Heart right ventricle (tissue), 16 donors: ENCODE measurements at regions of chr11 and their contacts with region 1.

Region 1: DNA sequence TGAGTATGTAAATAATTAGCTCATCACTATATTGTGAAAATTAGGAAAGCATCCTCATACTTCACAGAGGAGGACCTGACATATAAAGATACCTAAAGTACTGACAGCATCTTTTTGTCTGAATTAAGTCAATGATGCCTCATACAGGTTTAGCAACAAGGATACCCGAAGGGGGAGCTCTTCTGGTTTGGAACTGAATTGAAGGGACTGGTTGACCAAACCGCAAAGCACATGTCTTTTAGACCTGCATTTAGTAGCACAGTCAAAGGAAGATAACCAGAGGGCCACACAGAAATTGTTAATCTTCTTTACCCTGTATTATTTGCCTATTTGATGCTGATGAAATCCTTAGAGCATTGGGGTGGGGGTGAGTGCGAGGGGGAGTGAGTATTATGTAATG is 12.9 kb upstream of the WT1 start:
- DNase-seq: no peak
- ATAC-seq: no peak
- H3K4me3 ChIP-seq: no peak overlapping the region
- H3K27ac ChIP-seq: no peak overlapping the region
- H3K4me1 ChIP-seq: peaks cover 0 to 8% (median 0%) of the 10 kb centered on the region in 9 donors
- H3K27me3 ChIP-seq: peaks cover 0 to 15% (median 9%) of the 10 kb centered on the region in 7 donors
- CTCF ChIP-seq: peak in 1 of 9 donors; percentile 16

Region 2: DNA sequence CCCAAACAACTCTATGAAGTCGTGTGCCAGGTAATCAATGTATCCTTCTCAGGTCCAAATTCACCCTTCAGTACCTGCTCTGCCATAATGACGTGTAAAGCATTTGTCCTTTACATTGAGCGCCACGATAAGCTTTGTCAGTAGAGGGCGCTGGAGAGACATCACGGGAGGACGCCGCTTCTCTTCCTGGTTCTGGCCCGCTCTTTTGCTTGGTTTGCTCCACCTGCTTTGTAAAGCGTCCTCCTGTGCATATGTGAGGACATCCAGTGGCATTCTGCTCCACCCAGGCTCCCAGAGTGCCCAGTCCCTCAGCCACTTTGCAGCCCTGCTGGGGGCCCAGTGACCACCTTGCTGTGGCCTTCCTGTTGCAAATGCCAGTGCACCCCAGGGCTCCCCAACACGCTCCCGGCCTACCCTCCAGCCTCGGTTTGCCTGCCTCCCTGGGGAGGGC is 73.9 kb before region 1 on chr11:
- intact Hi-C with region 1: no loop called
- DNase-seq: peak in 1 of 2 donors; percentile 31
- ATAC-seq: peak in 2 of 8 donors; percentile 41 to 61
- H3K4me3 ChIP-seq: no peak overlapping the region
- H3K27ac ChIP-seq: no peak overlapping the region
- H3K4me1 ChIP-seq: no peaks in the 10 kb centered on the region
- H3K27me3 ChIP-seq: peaks cover 0 to 7% (median 0%) of the 10 kb centered on the region in 7 donors
- CTCF ChIP-seq: peak; percentile 32 to 68 (median 56)

Region 3: GRCh38 chr11:32500001-32500400 is 51.8 kb after region 1 on chr11:
- intact Hi-C with region 1: loop called in 1 of 10 experiments (anchors 10 kb)
- DNase-seq: no peak
- ATAC-seq: peak in 1 of 8 donors; percentile 69
- H3K4me3 ChIP-seq: no peak overlapping the region
- H3K27ac ChIP-seq: no peak overlapping the region
- H3K4me1 ChIP-seq: no peaks in the 10 kb centered on the region
- H3K27me3 ChIP-seq: no peaks in the 10 kb centered on the region
- CTCF ChIP-seq: no peak